Natural killer cell (primary cell): ENCODE measurements at regions of chr13 and their contacts with region 1.

Region 1: GRCh38 chr13:30114571-30115256 is 192.6 kb downstream of the KATNAL1 start:
- DNase-seq: peak; percentile 92 to 96
- ATAC-seq: peak; percentile 92 to 96 (median 96)
- H3K4me3 ChIP-seq: peak overlapping the region; percentile 28
- H3K4me3 Mint-ChIP-seq: peak overlapping the region; percentile 88
- H3K27ac ChIP-seq: no peak overlapping the region
- H3K27ac Mint-ChIP-seq: peak overlapping the region; percentile 52 to 85
- H3K4me1 ChIP-seq: peaks cover 21% of the 10 kb centered on the region
- H3K4me1 Mint-ChIP-seq: peaks cover 24 to 28% of the 10 kb centered on the region in 2 donors
- H3K27me3 ChIP-seq: no peaks in the 10 kb centered on the region
- H3K27me3 Mint-ChIP-seq: peaks cover 8% of the 10 kb centered on the region in 2 donors
- CTCF ChIP-seq: peak; percentile 82

Region 2: DNA sequence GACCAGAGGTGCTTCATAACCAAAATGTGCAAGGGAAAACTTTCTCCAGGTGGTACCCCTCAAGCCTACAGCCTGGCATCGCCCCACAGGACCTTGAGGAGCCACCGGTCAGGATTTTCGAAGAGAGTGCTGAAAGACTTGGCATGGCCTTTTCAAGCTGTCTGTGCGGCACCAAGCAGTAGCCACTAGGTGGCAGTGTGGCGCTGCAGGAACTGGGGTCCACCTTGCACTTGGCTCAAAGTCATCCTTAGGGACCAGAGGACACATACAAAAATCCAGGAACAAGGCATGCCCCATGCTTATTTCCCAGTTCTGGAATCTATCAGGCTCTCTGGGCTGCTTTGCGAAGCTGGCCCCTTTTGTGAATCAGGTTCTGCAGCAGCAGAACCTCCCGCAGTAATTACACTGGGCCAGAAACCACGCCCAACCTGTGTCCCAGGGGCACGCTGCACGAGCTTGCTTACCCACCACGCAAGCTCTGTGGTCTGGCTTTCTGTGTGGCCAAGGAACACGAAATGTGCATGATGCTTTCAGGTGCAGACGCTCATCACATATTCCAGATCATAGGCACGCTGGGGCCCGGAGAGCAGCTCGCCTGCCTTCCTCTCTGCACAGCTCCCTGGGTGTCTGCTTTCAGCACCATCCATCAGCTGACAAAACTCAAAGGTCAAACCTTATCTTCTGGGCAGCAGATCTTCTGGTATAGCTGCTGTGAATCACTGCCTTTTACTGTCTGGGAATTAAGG is 606.4 kb before region 1 on chr13:
- intact Hi-C with region 1: loop called (anchors 1 kb)
- DNase-seq: peak; percentile 70 to 86
- ATAC-seq: peak; percentile 77 to 89 (median 81)
- H3K4me3 ChIP-seq: no peak overlapping the region
- H3K4me3 Mint-ChIP-seq: no peak overlapping the region
- H3K27ac ChIP-seq: no peak overlapping the region
- H3K27ac Mint-ChIP-seq: no peak overlapping the region
- H3K4me1 ChIP-seq: no peaks in the 10 kb centered on the region
- H3K4me1 Mint-ChIP-seq: peaks cover 0 to 8% of the 10 kb centered on the region in 2 donors
- H3K27me3 ChIP-seq: no peaks in the 10 kb centered on the region
- H3K27me3 Mint-ChIP-seq: peaks cover 3 to 14% of the 10 kb centered on the region in 2 donors
- CTCF ChIP-seq: peak; percentile 94

Region 3: GRCh38 chr13:29595380-29596063 is 519.2 kb before region 1 on chr13 and contains the start of gene SLC7A1:
- intact Hi-C with region 1: loop called (anchors 10 kb)
- DNase-seq: peak; percentile 86 to 93
- ATAC-seq: peak; percentile 82 to 94 (median 88)
- H3K4me3 ChIP-seq: peak within 1 kb of the TSS; percentile 49
- H3K4me3 Mint-ChIP-seq: peak within 1 kb of the TSS; percentile 89
- H3K27ac ChIP-seq: peak within 1 kb of the TSS; percentile 46
- H3K27ac Mint-ChIP-seq: peak within 1 kb of the TSS; percentile 78 to 85
- H3K4me1 ChIP-seq: peaks cover 13% of the 10 kb centered on the region
- H3K4me1 Mint-ChIP-seq: peaks cover 27 to 28% of the 10 kb centered on the region in 2 donors
- H3K27me3 ChIP-seq: no peaks in the 10 kb centered on the region
- H3K27me3 Mint-ChIP-seq: no peaks in the 10 kb centered on the region
- CTCF ChIP-seq: no peak
- total RNA-seq, gene SLC7A1: 8.7 to 12.6 (median 10.2) TPM

Region 4: GRCh38 chr13:29771247-29771646 is 343.5 kb before region 1 on chr13:
- intact Hi-C with region 1: loop called (anchors 1 kb)
- DNase-seq: peak in 1 of 2 donors; percentile 72
- ATAC-seq: peak in 2 of 3 donors; percentile 53 to 57
- H3K4me3 ChIP-seq: no peak overlapping the region
- H3K4me3 Mint-ChIP-seq: no peak overlapping the region
- H3K27ac ChIP-seq: no peak overlapping the region
- H3K27ac Mint-ChIP-seq: no peak overlapping the region
- H3K4me1 ChIP-seq: no peaks in the 10 kb centered on the region
- H3K4me1 Mint-ChIP-seq: no peaks in the 10 kb centered on the region
- H3K27me3 ChIP-seq: no peaks in the 10 kb centered on the region
- H3K27me3 Mint-ChIP-seq: no peaks in the 10 kb centered on the region
- CTCF ChIP-seq: peak; percentile 69

Region 5: DNA sequence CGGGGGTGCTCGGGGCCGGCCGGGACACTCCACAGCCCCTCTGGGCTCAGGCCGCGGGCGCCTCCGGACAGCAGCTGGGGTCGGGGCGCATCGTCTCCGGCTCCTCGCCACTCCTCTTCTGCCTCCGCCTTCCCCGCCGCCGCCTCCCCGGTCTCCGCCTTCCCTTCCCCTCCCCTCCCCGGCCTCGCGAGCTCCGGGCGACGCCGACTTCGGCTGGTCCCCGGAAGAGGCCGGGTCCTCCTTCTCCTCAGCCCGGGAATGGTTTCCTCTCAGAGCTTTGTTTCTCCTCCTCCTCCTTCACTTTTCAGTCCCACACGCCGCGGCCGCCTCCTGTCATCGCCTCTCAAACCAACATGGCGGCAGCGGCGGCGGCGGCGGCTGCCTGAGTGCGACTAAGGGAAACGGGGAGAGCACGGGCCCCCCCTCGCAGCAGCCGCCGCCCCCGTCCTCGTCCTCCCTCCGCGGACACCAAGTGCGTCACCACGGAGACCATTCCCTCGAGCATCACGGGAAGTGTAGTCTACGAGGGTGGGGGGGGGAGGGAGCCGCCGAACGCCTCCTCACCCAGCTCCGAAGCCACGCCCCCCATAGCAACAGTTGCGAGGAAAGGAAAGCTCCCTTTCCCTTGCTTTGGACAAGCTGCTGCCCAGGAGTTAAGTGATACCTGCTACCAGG is 264.4 kb before region 1 on chr13 and contains the start of gene UBL3:
- intact Hi-C with region 1: loop called (anchors 5 kb)
- DNase-seq: peak; percentile 87 to 96
- ATAC-seq: peak; percentile 86 to 96 (median 92)
- H3K4me3 ChIP-seq: peak within 1 kb of the TSS; percentile 95
- H3K4me3 Mint-ChIP-seq: peak within 1 kb of the TSS; percentile 95
- H3K27ac ChIP-seq: peak within 1 kb of the TSS; percentile 99
- H3K27ac Mint-ChIP-seq: peak within 1 kb of the TSS; percentile 96 to 100
- H3K4me1 ChIP-seq: peaks cover 6% of the 10 kb centered on the region
- H3K4me1 Mint-ChIP-seq: peaks cover 40 to 47% of the 10 kb centered on the region in 2 donors
- H3K27me3 ChIP-seq: no peaks in the 10 kb centered on the region
- H3K27me3 Mint-ChIP-seq: peaks cover 0 to 6% of the 10 kb centered on the region in 2 donors
- CTCF ChIP-seq: no peak
- total RNA-seq, gene UBL3: 29.6 to 36.0 (median 31.5) TPM

Region 6: DNA sequence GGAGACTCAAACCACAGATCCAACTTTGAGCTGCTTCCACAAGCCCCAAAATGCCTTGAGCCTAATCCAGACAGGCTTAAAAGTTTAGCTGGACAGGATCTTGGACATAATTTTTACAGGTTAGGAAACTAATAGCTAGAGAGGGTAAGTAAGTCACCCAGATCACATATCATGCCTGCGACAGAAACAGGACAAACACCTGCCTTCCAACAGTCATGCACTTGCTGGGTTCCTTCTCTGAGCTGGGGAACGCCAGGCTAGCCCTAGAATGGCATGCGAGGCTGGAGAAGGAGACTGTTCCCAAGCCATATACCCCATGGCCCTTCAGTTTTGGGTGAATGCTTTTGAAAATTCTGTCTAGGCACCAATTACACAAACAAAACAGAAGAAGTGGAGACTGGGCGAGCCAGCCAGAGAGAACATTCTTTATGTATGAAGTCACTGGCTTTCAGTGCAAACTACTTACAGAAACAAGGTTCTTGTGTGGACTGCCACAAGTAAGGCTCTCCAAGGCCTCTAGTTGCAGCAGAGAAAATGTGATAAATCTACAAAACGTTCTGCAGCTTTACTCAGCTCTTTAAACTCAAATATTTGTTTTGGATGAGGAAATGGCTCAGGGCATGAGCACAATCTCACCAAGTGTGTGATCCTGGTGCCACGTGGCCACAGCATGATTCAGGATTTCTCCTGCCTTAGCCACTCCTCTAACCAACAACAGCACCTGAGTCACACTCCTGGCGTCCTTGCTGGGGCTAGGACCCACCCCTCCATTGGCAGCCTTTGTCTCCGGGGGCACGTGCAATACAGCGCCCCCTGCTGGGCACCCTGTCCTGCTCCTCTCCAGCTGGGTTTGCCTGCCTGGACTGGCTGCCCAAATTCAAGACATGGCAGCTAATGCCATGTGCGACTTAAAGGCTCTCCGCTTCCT is 190.9 kb before region 1 on chr13:
- intact Hi-C with region 1: loop called (anchors 10 kb)
- DNase-seq: peak; percentile 62 to 73
- ATAC-seq: peak; percentile 68 to 89 (median 85)
- H3K4me3 ChIP-seq: no peak overlapping the region
- H3K4me3 Mint-ChIP-seq: no peak overlapping the region
- H3K27ac ChIP-seq: no peak overlapping the region
- H3K27ac Mint-ChIP-seq: peak overlapping the region in 1 of 2 donors; percentile 16
- H3K4me1 ChIP-seq: peaks cover 4% of the 10 kb centered on the region
- H3K4me1 Mint-ChIP-seq: peaks cover 11 to 21% of the 10 kb centered on the region in 2 donors
- H3K27me3 ChIP-seq: no peaks in the 10 kb centered on the region
- H3K27me3 Mint-ChIP-seq: peaks cover under 1 to 3% of the 10 kb centered on the region in 2 donors
- CTCF ChIP-seq: peak; percentile 92